B cell (primary cell): ENCODE measurements at regions of chr7 and their contacts with region 1.

Region 1: GRCh38 chr7:1459522-1459892 is 237 bp upstream of the MICALL2 start:
- DNase-seq: peak; percentile 97
- ATAC-seq: peak; percentile 95
- H3K4me3 ChIP-seq: peak overlapping the region in 4 of 5 experiments; percentile 53 to 79 (median 68)
- H3K4me3 Mint-ChIP-seq: peak overlapping the region; percentile 81
- H3K27ac ChIP-seq: no peak overlapping the region
- H3K27ac Mint-ChIP-seq: no peak overlapping the region
- H3K4me1 ChIP-seq: peaks cover 18 to 26% of the 10 kb centered on the region in 2 donors
- H3K4me1 Mint-ChIP-seq: peaks cover 20% of the 10 kb centered on the region
- H3K27me3 ChIP-seq: no peaks in the 10 kb centered on the region
- H3K27me3 Mint-ChIP-seq: no peaks in the 10 kb centered on the region
- CTCF ChIP-seq: no peak

Region 2: GRCh38 chr7:1412322-1413261 is 46.9 kb before region 1 on chr7:
- CTCF ChIA-PET with region 1: no interaction called
- POLR2A ChIA-PET with region 1: no interaction called
- intact Hi-C with region 1: loop called (anchors 2 kb)
- DNase-seq: peak; percentile 84
- ATAC-seq: peak; percentile 95
- H3K4me3 ChIP-seq: peak overlapping the region in 1 of 5 experiments; percentile 15
- H3K4me3 Mint-ChIP-seq: peak overlapping the region; percentile 17
- H3K27ac ChIP-seq: no peak overlapping the region
- H3K27ac Mint-ChIP-seq: no peak overlapping the region
- H3K4me1 ChIP-seq: peaks cover 5 to 9% of the 10 kb centered on the region in 2 donors
- H3K4me1 Mint-ChIP-seq: peaks cover 8% of the 10 kb centered on the region
- H3K27me3 ChIP-seq: peaks cover 0 to 24% (median 4%) of the 10 kb centered on the region in 4 experiments
- H3K27me3 Mint-ChIP-seq: peaks cover 23% of the 10 kb centered on the region
- CTCF ChIP-seq: peak; percentile 71